A549 (cell line): ENCODE measurements at regions of chr10 and their contacts with region 1.

Region 1: DNA sequence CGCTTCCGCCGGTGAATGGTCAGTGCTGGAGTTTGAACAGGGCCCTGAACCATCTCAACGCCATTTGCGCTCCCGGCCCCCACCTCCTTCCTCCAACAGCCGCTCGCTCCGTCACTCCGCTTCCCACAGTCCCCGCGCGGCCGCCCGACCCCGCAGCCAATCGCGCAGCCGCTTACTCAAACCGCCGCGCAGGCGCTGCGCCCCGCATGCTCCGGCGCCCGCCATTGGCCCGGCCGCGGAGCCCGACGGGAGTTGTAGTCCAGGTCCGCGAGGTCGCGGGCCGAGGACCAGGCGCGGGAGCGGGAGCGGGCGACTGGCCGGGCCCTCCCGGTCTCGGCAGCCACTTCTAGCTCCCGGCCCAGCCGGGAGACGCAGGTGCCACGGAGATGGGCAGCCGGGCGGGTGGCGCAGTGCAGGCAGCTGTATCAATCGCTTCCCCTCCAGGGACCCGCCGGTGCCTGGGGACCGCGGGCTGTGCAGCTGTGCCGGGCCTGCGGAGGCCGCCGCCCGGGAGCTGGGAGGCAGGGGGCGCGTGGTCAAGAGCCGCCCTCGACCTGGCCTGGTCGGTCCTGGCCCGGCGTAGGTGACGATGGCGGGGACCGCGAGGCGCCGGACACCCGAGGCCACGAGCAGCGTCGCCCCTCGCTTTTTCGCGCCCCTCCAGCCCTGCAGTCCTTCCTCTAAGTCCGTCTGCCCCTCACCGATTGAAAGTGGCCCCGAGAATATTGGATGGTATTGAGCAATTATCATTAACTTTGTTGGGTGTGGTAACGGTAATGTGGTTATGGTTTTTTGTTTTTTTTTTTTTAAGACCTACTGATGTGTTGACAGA is at the start of gene WAPL:
- DNase-seq: peak; percentile 95
- ATAC-seq: peak; percentile 93 to 97
- H3K4me3 ChIP-seq: peak within 1 kb of the TSS; percentile 95
- H3K27ac ChIP-seq: peak within 1 kb of the TSS; percentile 94 to 98
- H3K4me1 ChIP-seq: peaks cover 40% of the 10 kb centered on the region
- CTCF ChIP-seq: no peak
- EP300 ChIP-seq: no peak
- POLR2A ChIP-seq: peak; percentile 55
- RAD21 ChIP-seq: no peak; a peak in 1 of 5 replicates
- polyA plus RNA-seq, gene WAPL: 20.1 and 25.6 TPM in 2 replicates

Region 2: GRCh38 chr10:86535057-86535882 is 13.4 kb after region 1 on chr10:
- CTCF ChIA-PET with region 1: interaction called, 10 read pairs
- POLR2A ChIA-PET with region 1: interaction called, 12 read pairs
- DNase-seq: peak; percentile 77 to 95
- ATAC-seq: peak; percentile 99
- H3K4me3 ChIP-seq: peak overlapping the region; percentile 48
- H3K27ac ChIP-seq: peak overlapping the region; percentile 81 to 91
- H3K4me1 ChIP-seq: peaks cover 9% of the 10 kb centered on the region
- CTCF ChIP-seq: no peak
- EP300 ChIP-seq: no peak
- POLR2A ChIP-seq: peak; percentile 66
- RAD21 ChIP-seq: 0 out of 5 replicates have a peak, but pooled peaks of 1 of the 2 experiments have one; percentile 24